K562 (cell line): ENCODE measurements at regions of chr1 and their contacts with region 1.

Region 1: DNA sequence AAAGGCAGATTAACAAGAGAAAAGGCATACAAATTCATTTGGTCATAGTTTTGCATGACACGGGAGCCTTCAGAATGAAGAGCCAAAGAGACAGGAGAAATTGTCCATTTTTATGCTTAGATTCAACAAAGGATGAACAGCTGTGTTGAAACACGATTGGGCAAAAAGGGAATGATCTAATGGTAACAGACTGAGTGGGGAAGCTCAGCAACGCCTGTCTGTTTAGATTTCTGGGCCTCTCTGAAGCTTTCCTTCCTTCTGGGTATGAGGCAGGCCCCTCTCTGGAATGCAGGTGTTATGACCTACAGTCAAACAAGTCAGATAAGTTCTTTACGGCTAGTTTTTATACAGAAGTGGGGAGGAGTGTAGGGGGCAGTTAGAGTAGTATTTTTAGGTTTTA is 154.6 kb downstream of the RGS7 start:
- DNase-seq: no peak
- ATAC-seq: no peak
- H3K4me3 ChIP-seq: no peak overlapping the region
- H3K27ac ChIP-seq: no peak overlapping the region
- H3K4me1 ChIP-seq: no peaks in the 10 kb centered on the region
- H3K27me3 ChIP-seq: no peaks in the 10 kb centered on the region
- CTCF ChIP-seq: no peak
- EP300 ChIP-seq: no peak
- POLR2A ChIP-seq: no peak
- RAD21 ChIP-seq: no peak

Region 2: GRCh38 chr1:241292973-241293372 is 90.6 kb after region 1 on chr1:
- CTCF ChIA-PET with region 1: no interaction called
- POLR2A ChIA-PET with region 1: no interaction called
- in situ Hi-C with region 1: no loop called
- intact Hi-C with region 1: loop called (anchors 5 kb)
- DNase-seq: no peak
- ATAC-seq: no peak
- H3K4me3 ChIP-seq: no peak overlapping the region
- H3K27ac ChIP-seq: no peak overlapping the region
- H3K4me1 ChIP-seq: no peaks in the 10 kb centered on the region
- H3K27me3 ChIP-seq: no peaks in the 10 kb centered on the region
- CTCF ChIP-seq: no peak
- EP300 ChIP-seq: no peak
- POLR2A ChIP-seq: no peak
- RAD21 ChIP-seq: no peak